ENCODE measurements at regions of chr21 and their contacts with region 1.

Region 1: DNA sequence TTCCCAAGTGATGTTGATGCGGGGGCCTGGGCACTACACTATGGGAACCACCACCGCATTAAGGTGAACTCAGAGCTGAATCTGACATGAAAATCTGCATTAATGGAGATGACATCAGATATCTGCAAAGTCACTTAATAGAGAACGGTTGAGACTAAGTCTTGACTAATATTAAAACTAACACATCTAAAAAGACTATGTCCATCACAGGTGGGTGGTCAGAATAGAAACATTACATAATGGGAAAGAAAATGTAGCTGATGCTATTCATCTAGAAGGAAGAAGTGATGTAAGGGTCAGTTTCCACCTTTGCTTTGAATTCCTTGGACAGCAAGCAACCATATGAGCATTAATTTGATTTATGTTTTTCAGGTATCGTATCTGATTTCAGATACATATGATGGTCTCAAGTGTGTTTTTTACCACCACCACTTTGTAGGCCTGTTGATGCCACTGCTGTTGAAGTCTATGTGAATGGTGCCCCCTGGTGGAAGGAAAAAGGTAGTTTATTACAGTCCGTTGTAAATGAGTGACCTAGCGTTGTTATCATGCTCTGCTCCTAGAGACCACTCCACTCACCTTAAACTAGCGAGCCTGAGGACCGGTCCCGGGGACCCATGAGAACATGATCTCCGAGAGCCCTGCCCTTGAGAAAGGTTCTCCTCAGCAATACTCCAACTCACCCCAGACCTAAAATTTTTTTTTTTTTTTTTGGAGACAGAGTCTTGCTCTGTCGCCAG is 73.5 kb downstream of the BACH1 start:
- DNase-seq: peak; percentile 87
- ATAC-seq: peak; percentile 78
- H3K4me3 ChIP-seq: no peak overlapping the region
- H3K4me3 Mint-ChIP-seq: no peak overlapping the region
- H3K27ac ChIP-seq: peak overlapping the region in 1 of 2 donors; percentile 24
- H3K27ac Mint-ChIP-seq: no peak overlapping the region
- H3K4me1 ChIP-seq: peaks cover 0 to 8% of the 10 kb centered on the region in 2 donors
- H3K4me1 Mint-ChIP-seq: peaks cover 12% of the 10 kb centered on the region
- H3K27me3 ChIP-seq: no peaks in the 10 kb centered on the region
- H3K27me3 Mint-ChIP-seq: no peaks in the 10 kb centered on the region
- CTCF ChIP-seq: peak; percentile 83

Region 2: DNA sequence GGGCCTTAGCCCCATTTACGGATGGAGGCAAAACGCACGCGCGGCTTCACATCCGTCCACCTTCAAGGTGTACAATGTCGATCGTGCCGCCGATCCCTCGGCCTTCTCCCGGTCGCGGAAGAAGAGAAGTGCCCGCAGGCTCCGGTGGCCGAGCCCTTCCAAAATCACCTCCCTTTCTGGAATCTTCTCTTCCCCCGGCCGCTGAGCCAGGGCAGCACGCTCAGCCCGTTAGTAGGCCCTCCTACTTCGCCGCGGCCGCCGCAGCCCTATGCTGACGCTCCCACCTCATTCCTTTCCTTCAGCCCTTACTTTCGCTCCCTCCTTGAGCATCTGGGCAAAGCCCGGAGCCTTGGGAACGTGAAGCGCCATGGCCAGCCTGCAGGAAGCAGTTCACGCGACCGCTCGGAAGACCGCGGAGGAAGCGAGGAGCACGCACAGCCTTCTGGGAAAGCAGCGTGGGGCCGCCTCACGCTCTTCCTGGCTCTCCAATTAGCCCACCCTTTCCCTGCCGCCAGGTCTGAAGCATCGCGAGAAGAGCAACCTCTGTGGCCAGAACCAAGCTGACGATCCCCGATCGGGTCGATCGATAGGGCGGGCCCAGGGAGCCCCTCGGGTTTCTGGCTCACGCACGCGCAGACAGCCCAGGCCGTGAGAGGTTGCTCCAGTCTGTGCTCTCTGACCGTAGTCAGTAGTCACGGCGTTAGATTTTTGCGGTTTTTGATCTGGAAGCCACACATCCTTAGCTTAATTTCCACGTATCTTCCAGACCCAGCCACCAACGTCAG is 298.8 kb before region 1 on chr21 and contains the start of gene CCT8:
- CTCF ChIA-PET with region 1: interaction called, 6 read pairs
- POLR2A ChIA-PET with region 1: no interaction called
- intact Hi-C with region 1: loop called (anchors 5 kb)
- DNase-seq: peak; percentile 99
- ATAC-seq: peak; percentile 91
- H3K4me3 ChIP-seq: peak within 1 kb of the TSS; percentile 72 to 99 (median 98)
- H3K4me3 Mint-ChIP-seq: peak within 1 kb of the TSS; percentile 99
- H3K27ac ChIP-seq: peak within 1 kb of the TSS; percentile 80 to 86
- H3K27ac Mint-ChIP-seq: peak within 1 kb of the TSS; percentile 96
- H3K4me1 ChIP-seq: peaks cover 27 to 33% of the 10 kb centered on the region in 2 donors
- H3K4me1 Mint-ChIP-seq: peaks cover 57% of the 10 kb centered on the region
- H3K27me3 ChIP-seq: no peaks in the 10 kb centered on the region
- H3K27me3 Mint-ChIP-seq: no peaks in the 10 kb centered on the region
- CTCF ChIP-seq: no peak
- total RNA-seq, gene CCT8: 92.8 and 100 TPM in 2 replicates

Region 3: DNA sequence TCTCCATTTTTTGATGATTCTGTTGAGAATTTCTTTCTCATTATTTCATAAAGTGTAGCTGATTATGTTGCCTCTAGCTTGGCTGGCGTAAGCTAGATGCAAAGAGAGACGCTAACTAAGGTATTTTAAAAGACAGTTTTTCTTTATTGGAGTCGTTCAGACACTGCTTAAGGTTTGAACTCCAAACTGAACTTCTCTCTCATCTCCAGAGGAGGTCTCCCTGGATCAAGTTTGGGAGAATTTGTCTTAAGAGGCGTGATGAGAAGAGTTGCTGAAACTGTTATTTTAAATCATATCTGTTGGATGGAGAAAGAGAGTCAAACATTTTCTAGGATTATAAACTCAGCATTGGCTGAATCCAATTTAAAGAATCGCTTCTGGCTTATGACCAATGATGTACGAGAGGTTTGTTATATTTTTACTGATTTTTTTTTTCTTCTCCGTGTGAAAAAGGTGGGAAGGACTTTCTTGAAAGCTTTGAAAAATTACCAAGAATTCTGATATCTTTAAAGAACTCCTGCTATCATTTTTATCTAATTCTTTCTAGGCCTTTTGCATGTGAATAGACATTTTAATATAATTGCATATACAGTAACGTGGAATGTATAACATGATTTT is 207.8 kb before region 1 on chr21:
- CTCF ChIA-PET with region 1: interaction called, 25 read pairs
- POLR2A ChIA-PET with region 1: no interaction called
- intact Hi-C with region 1: loop called (anchors 1 kb)
- DNase-seq: peak; percentile 39
- ATAC-seq: no peak
- H3K4me3 ChIP-seq: no peak overlapping the region
- H3K4me3 Mint-ChIP-seq: no peak overlapping the region
- H3K27ac ChIP-seq: no peak overlapping the region
- H3K27ac Mint-ChIP-seq: no peak overlapping the region
- H3K4me1 ChIP-seq: no peaks in the 10 kb centered on the region
- H3K4me1 Mint-ChIP-seq: no peaks in the 10 kb centered on the region
- H3K27me3 ChIP-seq: no peaks in the 10 kb centered on the region
- H3K27me3 Mint-ChIP-seq: no peaks in the 10 kb centered on the region
- CTCF ChIP-seq: peak; percentile 37

Region 4: DNA sequence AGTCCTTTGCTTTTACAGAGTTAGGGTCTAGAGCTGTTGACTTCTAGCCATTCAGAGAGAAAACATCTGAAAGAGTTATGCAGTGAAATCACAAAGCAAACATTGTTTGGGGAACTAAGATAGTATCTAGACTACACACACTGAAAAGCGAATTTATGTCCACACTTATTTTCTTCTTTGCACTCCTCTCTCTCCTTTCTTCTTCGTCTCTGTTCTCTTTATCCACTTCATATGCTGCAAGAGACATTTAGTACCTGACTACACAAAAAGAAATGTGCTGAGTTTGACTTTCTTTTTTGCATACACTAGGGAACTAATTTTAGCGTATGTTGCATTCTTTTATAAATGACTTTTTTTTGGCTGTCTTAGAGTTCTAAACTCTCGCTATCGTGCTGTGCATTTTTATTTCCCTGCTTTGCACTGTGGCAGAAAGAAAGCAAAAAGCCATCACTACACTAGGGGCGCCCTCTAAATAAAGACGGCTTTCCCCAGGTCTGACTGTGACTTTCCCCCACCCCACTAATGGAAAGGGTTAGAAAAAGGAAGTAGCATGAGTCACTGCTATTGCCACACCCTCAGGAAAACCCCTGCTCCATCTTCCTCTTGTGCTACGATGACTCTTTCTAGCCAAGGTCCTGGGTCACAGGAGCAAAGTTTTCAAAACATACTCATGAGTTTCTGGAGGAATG is 176.1 kb before region 1 on chr21:
- CTCF ChIA-PET with region 1: interaction called, 4 read pairs
- POLR2A ChIA-PET with region 1: no interaction called
- intact Hi-C with region 1: loop called (anchors 1 kb)
- DNase-seq: peak; percentile 92
- ATAC-seq: peak; percentile 97
- H3K4me3 ChIP-seq: peak overlapping the region; percentile 13 to 67 (median 36)
- H3K4me3 Mint-ChIP-seq: peak overlapping the region; percentile 79
- H3K27ac ChIP-seq: peak overlapping the region; percentile 72 to 87
- H3K27ac Mint-ChIP-seq: peak overlapping the region; percentile 94
- H3K4me1 ChIP-seq: peaks cover 17 to 22% of the 10 kb centered on the region in 2 donors
- H3K4me1 Mint-ChIP-seq: peaks cover 39% of the 10 kb centered on the region
- H3K27me3 ChIP-seq: no peaks in the 10 kb centered on the region
- H3K27me3 Mint-ChIP-seq: no peaks in the 10 kb centered on the region
- CTCF ChIP-seq: peak; percentile 75

Region 5: GRCh38 chr21:29265690-29266479 is 106.3 kb before region 1 on chr21:
- CTCF ChIA-PET with region 1: interaction called, 8 read pairs
- POLR2A ChIA-PET with region 1: no interaction called
- intact Hi-C with region 1: loop called (anchors 10 kb)
- DNase-seq: peak; percentile 35
- ATAC-seq: peak; percentile 51
- H3K4me3 ChIP-seq: no peak overlapping the region
- H3K4me3 Mint-ChIP-seq: no peak overlapping the region
- H3K27ac ChIP-seq: no peak overlapping the region
- H3K27ac Mint-ChIP-seq: no peak overlapping the region
- H3K4me1 ChIP-seq: no peaks in the 10 kb centered on the region
- H3K4me1 Mint-ChIP-seq: peaks cover 9% of the 10 kb centered on the region
- H3K27me3 ChIP-seq: no peaks in the 10 kb centered on the region
- H3K27me3 Mint-ChIP-seq: no peaks in the 10 kb centered on the region
- CTCF ChIP-seq: no peak

Region 6: DNA sequence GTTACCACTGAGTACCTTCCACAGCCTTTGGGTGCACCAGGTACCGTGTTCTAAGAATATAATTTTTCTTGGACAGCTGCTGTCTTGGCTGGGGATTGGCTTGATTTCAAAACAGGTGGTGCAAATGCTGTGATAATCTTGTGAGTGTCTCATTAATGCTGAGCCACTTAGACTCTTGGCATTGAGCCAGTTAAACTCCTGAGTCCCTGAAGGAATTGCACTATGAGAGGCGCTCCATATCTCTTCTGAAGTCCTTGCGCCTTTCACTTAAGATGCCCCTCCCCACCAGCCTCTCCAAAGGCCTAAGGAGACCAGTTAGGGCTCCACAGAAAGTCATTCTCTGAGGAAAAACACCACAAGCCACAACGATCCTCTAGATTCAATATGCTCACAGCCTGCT is 22.5 kb before region 1 on chr21:
- CTCF ChIA-PET with region 1: interaction called, 12 read pairs
- POLR2A ChIA-PET with region 1: no interaction called
- intact Hi-C with region 1: no loop called
- DNase-seq: no peak
- ATAC-seq: no peak
- H3K4me3 ChIP-seq: no peak overlapping the region
- H3K4me3 Mint-ChIP-seq: no peak overlapping the region
- H3K27ac ChIP-seq: no peak overlapping the region
- H3K27ac Mint-ChIP-seq: peak overlapping the region; percentile 23
- H3K4me1 ChIP-seq: peaks cover 16 to 18% of the 10 kb centered on the region in 2 donors
- H3K4me1 Mint-ChIP-seq: peaks cover 25% of the 10 kb centered on the region
- H3K27me3 ChIP-seq: no peaks in the 10 kb centered on the region
- H3K27me3 Mint-ChIP-seq: no peaks in the 10 kb centered on the region
- CTCF ChIP-seq: no peak

Region 7: DNA sequence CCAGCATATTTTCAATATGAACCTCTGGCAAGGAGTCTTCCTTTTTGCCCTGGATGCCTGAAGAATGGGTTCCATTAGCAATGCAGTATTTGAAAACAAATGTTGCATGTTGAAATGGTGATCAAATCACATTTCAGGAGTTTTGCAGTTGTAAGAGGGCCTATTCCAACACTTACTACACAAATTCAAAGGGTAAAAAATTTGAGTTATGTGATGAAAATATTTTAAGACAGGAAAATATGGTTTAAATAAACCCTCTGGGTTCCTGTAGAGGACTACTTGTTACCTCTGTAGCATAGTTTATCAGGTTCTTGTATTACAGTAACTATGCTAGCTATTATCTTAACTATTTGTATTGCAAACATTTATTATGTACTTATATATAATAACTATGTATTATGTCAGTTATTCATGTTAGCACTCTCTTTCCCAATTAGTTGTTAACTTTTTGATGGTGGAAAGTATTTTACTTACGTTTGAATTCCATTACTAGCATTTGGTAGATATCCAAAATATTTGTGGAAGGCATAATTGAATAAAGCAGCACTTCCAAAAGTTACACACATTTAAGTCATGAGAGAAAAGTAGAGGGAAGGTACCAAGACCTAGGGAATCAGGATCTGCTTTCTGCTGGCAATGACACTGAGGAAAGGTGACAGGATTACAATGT is 254.7 kb after region 1 on chr21:
- CTCF ChIA-PET with region 1: no interaction called
- POLR2A ChIA-PET with region 1: no interaction called
- intact Hi-C with region 1: no loop called
- DNase-seq: no peak
- ATAC-seq: no peak
- H3K4me3 ChIP-seq: no peak overlapping the region
- H3K4me3 Mint-ChIP-seq: no peak overlapping the region
- H3K27ac ChIP-seq: no peak overlapping the region
- H3K27ac Mint-ChIP-seq: no peak overlapping the region
- H3K4me1 ChIP-seq: no peaks in the 10 kb centered on the region
- H3K4me1 Mint-ChIP-seq: no peaks in the 10 kb centered on the region
- H3K27me3 ChIP-seq: no peaks in the 10 kb centered on the region
- H3K27me3 Mint-ChIP-seq: no peaks in the 10 kb centered on the region
- CTCF ChIP-seq: no peak

Region 8: GRCh38 chr21:29849735-29850176 is 477.5 kb after region 1 on chr21:
- CTCF ChIA-PET with region 1: interaction called, 4 read pairs
- POLR2A ChIA-PET with region 1: no interaction called
- intact Hi-C with region 1: loop called (anchors 10 kb)
- DNase-seq: peak; percentile 51
- ATAC-seq: peak; percentile 86
- H3K4me3 ChIP-seq: no peak overlapping the region
- H3K4me3 Mint-ChIP-seq: no peak overlapping the region
- H3K27ac ChIP-seq: no peak overlapping the region
- H3K27ac Mint-ChIP-seq: no peak overlapping the region
- H3K4me1 ChIP-seq: no peaks in the 10 kb centered on the region
- H3K4me1 Mint-ChIP-seq: no peaks in the 10 kb centered on the region
- H3K27me3 ChIP-seq: peaks cover 0 to 3% (median 0%) of the 10 kb centered on the region in 4 experiments
- H3K27me3 Mint-ChIP-seq: peaks cover 16% of the 10 kb centered on the region
- CTCF ChIP-seq: peak; percentile 79

Measured in B cell (primary cell).